ENCODE measurements at regions of chr4 and their contacts with region 1.

Region 1: GRCh38 chr4:87235020-87235671 is 14.7 kb upstream of the KLHL8 start:
- DNase-seq: no peak
- H3K4me3 ChIP-seq: peak overlapping the region; percentile 58
- CTCF ChIP-seq: no peak

Region 2: GRCh38 chr4:86741846-86742245 is 493.3 kb before region 1 on chr4:
- CTCF ChIA-PET with region 1: no interaction called
- POLR2A ChIA-PET with region 1: no interaction called
- DNase-seq: no peak
- H3K4me3 ChIP-seq: no peak overlapping the region
- CTCF ChIP-seq: no peak

Region 3: DNA sequence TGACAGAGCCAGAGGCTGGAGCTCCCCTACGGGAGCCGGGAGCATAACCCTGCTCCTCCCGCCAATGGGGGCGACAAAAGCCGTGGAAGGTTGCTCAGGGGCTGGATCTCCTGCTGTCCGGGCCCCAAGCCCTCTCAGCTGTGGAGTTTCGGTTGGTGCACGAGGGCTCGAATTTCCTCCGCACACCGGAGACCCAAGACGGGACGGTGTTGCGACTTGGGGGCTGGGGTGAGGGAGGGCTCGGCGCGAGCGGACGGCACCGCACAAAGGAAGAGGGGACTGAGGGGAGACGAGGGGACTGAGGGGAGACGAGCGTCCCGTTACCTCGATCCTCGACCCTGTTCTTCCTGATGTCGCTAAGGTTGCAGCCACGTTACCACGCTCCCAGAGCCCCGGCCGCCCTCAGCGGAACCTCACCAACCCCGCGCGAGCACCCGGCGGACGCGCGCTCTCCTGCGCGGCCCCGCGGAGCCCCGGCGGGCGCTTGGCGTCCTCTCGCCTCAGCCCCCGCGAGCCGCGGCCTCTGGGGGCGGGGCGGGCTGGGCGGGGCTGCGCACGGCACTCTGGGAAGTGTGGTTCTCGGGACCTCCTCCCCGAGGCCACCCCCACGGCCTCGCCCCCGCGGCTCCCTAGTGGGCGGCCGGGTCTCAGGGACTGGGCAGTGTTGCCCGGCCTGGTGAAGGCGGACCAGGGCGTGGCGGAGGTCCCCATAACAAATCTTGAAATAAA is 14.9 kb before region 1 on chr4 and contains the start of gene KLHL8:
- CTCF ChIA-PET with region 1: interaction called, 106 read pairs
- POLR2A ChIA-PET with region 1: no interaction called
- DNase-seq: no peak
- H3K4me3 ChIP-seq: peak within 1 kb of the TSS; percentile 98
- CTCF ChIP-seq: peak; percentile 31

Region 4: DNA sequence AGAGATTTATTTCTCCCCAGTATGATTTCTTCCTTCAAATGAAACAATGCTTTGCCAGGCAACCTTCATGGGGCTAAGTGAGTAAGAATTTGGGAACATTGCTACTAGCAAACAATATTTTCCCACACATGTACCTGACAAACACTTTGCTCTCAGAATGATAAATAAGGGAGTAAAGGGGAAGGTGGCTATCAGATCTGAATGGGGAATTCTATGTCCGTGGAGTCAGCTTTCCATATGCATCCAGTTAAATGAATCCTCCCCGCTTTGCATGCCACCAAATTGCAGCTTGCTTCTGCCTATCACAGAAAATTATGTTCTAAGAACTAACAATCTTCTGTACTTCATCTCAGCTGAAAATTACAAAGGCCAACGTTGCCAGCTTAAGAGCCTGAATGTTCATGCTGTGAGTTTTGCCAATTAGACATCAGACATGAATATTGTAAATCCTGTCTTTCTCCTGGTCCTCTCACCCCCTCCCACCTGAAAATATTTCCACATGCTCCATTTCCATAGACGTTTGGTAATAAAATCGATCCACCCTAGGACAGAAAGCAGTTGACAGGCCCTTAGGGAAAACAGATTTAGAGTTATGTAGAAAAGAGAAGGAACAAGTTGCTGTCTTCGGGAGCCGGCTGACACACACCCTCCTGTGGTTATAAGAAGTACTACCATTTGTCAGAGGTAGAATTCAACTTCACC is 603.9 kb after region 1 on chr4:
- CTCF ChIA-PET with region 1: no interaction called
- POLR2A ChIA-PET with region 1: no interaction called
- DNase-seq: no peak
- H3K4me3 ChIP-seq: no peak overlapping the region
- CTCF ChIP-seq: peak; percentile 50